ENCODE measurements at regions of chr6 and their contacts with region 1.

Region 1: DNA sequence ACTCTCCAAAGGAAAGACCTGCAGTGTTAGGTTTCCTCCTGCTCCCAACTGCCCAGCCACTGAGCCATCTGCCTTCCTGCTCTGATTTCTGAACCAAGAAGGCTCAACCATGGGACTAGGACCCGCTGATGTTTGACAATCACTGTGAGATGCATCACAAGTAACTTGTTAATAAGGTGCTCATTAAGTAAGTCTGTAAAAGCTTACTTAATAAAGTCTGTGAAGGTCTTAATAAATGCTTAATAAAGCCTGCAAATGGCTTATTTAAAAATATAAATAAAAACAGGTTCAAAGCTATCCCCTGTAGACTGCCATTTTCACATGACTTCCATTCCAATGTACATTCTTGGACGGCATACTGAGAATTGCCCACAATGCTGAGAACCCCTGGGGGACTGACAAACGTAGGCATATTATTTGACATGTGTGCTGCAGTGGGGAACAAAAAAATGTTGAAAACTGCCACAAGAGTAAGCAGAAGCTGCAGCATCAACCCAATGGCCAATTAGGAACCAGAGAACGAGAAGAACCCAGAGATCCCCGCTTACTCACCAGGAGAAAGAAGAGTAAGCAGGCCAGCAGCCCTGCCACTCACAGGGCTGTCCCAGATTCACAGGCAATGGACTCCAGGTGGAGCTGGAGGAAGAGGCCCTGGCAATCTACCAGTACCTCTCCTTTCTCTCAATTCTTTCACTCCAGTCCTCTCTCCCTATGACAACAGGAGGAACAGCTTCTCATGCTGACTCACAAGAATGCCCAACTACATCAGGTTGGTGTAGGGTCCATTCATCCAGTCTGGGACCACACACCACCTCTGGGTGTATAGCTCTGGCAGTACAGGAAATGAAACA is 19.5 kb downstream of the KIF13A start:
- DNase-seq: no peak
- H3K4me3 ChIP-seq: no peak overlapping the region
- H3K27ac ChIP-seq: no peak overlapping the region
- H3K4me1 ChIP-seq: peaks cover 6% of the 10 kb centered on the region
- H3K27me3 ChIP-seq: no peaks in the 10 kb centered on the region
- CTCF ChIP-seq: no peak

Region 2: DNA sequence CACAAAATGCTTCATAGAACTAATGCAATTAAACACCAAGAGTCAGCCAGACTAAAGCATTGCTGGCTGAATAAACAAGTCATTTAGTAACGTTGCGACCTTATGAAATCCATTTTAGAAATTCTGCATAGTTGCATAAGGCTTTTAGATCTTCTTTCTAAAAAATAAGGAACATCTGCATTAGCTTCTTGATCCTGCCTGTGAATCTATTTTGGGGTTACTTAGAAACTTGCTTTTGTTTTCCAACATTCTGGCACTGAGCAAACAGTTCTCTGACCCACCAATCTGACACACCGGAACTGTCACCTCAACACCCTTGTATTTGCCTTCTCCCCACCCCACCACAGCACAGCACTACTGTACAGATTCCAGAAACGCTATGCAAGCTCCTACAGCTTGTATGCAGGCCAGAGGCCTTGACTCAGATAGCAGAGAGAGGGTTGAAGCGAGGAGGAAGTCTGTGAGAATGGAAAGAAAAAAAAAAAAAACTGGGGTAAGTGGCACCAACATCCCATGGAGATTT is 35.5 kb before region 1 on chr6:
- intact Hi-C with region 1: loop called (anchors 5 kb)
- DNase-seq: no peak
- H3K4me3 ChIP-seq: no peak overlapping the region
- H3K27ac ChIP-seq: peak overlapping the region; percentile 7
- H3K4me1 ChIP-seq: peaks cover 5% of the 10 kb centered on the region
- H3K27me3 ChIP-seq: no peaks in the 10 kb centered on the region
- CTCF ChIP-seq: no peak

Measured in colonic mucosa (tissue), 4 donors.